Naive thymus-derived CD4-positive, alpha-beta T cell (primary cell): ENCODE measurements at regions of chrX and their contacts with region 1.

Region 1: GRCh38 chrX:74291964-74292807 is 11.8 kb upstream of the ZCCHC13 start:
- DNase-seq: peak; percentile 60 to 87 (median 80)
- ATAC-seq: peak; percentile 93
- H3K4me3 ChIP-seq: peak overlapping the region; percentile 94
- H3K4me3 Mint-ChIP-seq: peak overlapping the region; percentile 83 to 100 (median 96)
- H3K27ac ChIP-seq: peak overlapping the region; percentile 82
- H3K27ac Mint-ChIP-seq: peak overlapping the region; percentile 90 to 100 (median 96)
- H3K4me1 ChIP-seq: peaks cover 0 to 9% of the 10 kb centered on the region in 2 donors
- H3K4me1 Mint-ChIP-seq: peaks cover 0 to 31% (median 19%) of the 10 kb centered on the region in 7 donors
- H3K27me3 ChIP-seq: no peaks in the 10 kb centered on the region
- H3K27me3 Mint-ChIP-seq: no peaks in the 10 kb centered on the region

Region 2: GRCh38 chrX:73943693-73944562 is 348.3 kb before region 1 on chrX:
- CTCF ChIA-PET with region 1: no interaction called
- POLR2A ChIA-PET with region 1: interaction called, 4 read pairs
- intact Hi-C with region 1: loop called (anchors 1 kb)
- DNase-seq: peak; percentile 67 to 92 (median 87)
- ATAC-seq: peak; percentile 100
- H3K4me3 ChIP-seq: peak overlapping the region; percentile 98
- H3K4me3 Mint-ChIP-seq: peak overlapping the region; percentile 82 to 98 (median 94)
- H3K27ac ChIP-seq: peak overlapping the region; percentile 93
- H3K27ac Mint-ChIP-seq: peak overlapping the region; percentile 89 to 99 (median 96)
- H3K4me1 ChIP-seq: peaks cover 0 to 10% of the 10 kb centered on the region in 2 donors
- H3K4me1 Mint-ChIP-seq: peaks cover 12 to 49% (median 27%) of the 10 kb centered on the region in 7 donors
- H3K27me3 ChIP-seq: no peaks in the 10 kb centered on the region
- H3K27me3 Mint-ChIP-seq: peaks cover 0 to 2% (median 0%) of the 10 kb centered on the region in 5 donors

Region 3: GRCh38 chrX:74187211-74187610 is 105.0 kb before region 1 on chrX:
- CTCF ChIA-PET with region 1: no interaction called
- POLR2A ChIA-PET with region 1: no interaction called
- intact Hi-C with region 1: no loop called
- DNase-seq: no peak
- ATAC-seq: no peak
- H3K4me3 ChIP-seq: no peak overlapping the region
- H3K4me3 Mint-ChIP-seq: no peak overlapping the region
- H3K27ac ChIP-seq: no peak overlapping the region
- H3K27ac Mint-ChIP-seq: no peak overlapping the region
- H3K4me1 ChIP-seq: no peaks in the 10 kb centered on the region
- H3K4me1 Mint-ChIP-seq: no peaks in the 10 kb centered on the region
- H3K27me3 ChIP-seq: no peaks in the 10 kb centered on the region
- H3K27me3 Mint-ChIP-seq: no peaks in the 10 kb centered on the region

Region 4: DNA sequence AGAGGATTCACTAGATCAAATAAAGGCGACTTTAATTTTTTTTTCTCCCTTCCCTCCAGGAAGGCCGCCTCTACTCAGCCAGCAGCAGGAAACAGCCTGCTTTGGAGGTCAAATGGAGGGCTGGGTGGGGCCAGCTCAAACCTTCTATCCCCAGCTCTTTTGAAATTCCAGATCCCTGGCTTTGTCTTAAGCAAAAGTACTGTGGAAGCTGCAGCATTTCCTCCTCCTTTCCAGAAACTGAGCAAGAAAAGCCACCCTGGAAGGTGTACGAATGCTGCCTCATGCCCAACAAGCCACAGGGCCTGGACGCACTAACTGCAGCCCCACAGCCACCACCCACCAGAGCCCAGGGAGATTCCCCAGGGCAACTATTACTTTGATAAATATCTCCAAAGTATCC is 43.3 kb before region 1 on chrX:
- CTCF ChIA-PET with region 1: no interaction called
- POLR2A ChIA-PET with region 1: no interaction called
- intact Hi-C with region 1: loop called in 1 of 2 experiments (anchors 5 kb)
- DNase-seq: no peak
- ATAC-seq: no peak
- H3K4me3 ChIP-seq: no peak overlapping the region
- H3K4me3 Mint-ChIP-seq: no peak overlapping the region
- H3K27ac ChIP-seq: no peak overlapping the region
- H3K27ac Mint-ChIP-seq: no peak overlapping the region
- H3K4me1 ChIP-seq: no peaks in the 10 kb centered on the region
- H3K4me1 Mint-ChIP-seq: peaks cover 0 to 12% (median 10%) of the 10 kb centered on the region in 7 donors
- H3K27me3 ChIP-seq: no peaks in the 10 kb centered on the region
- H3K27me3 Mint-ChIP-seq: no peaks in the 10 kb centered on the region

Region 5: DNA sequence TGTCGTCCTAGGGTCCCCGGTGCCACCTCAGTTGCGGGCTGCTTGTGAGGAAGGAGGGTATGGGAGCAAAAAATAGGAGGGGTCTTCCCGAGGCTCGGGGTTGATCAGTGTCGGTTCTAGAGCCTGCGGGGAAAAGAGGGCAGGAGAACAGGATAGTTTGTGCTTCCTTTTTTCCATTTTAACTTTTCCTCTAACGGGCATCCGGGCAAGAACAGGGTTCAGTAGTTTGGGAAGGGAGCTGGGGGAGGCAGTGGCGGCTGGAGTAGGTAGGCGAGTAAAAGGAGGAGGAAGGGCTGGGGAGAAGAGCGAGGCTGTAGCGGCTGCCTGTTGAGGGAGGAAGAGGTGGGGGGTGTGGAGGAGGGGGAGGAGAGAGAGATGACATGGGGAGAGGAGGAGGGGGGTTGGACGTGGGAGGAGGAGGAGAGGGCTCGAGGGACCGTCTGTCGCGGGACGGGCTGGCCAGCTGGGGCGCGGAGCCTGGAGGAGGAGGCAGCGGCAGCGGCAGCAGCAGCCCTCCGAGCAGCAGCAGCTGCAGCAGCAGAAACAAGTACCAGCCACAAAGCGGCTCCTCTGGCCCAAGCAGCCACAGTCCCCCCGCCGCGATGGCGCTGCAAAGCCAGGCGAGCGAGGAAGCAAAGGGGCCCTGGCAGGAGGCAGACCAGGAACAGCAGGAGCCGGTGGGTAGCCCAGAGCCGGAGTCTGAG is 129.0 kb after region 1 on chrX and contains the start of gene SLC16A2:
- CTCF ChIA-PET with region 1: no interaction called
- POLR2A ChIA-PET with region 1: no interaction called
- intact Hi-C with region 1: loop called in 1 of 2 experiments (anchors 5 kb)
- DNase-seq: peak in 7 of 9 donors; percentile 16 to 44 (median 30)
- ATAC-seq: peak; percentile 58
- H3K4me3 ChIP-seq: peak within 1 kb of the TSS; percentile 41
- H3K4me3 Mint-ChIP-seq: peak within 1 kb of the TSS; percentile 81 to 91 (median 86)
- H3K27ac ChIP-seq: no peak within 1 kb of the TSS
- H3K27ac Mint-ChIP-seq: peak within 1 kb of the TSS in 2 of 9 donors; percentile 60 to 65
- H3K4me1 ChIP-seq: peaks cover 3% of the 10 kb centered on the region in 2 donors
- H3K4me1 Mint-ChIP-seq: peaks cover 0 to 14% (median 9%) of the 10 kb centered on the region in 7 donors
- H3K27me3 ChIP-seq: no peaks in the 10 kb centered on the region
- H3K27me3 Mint-ChIP-seq: peaks cover 0 to 59% (median 21%) of the 10 kb centered on the region in 5 donors
- total RNA-seq, gene SLC16A2: 0.27 to 0.38 (median 0.38) TPM in 3 of 5 experiments, not detected in the others

Region 6: GRCh38 chrX:74550295-74550802 is 258.2 kb after region 1 on chrX:
- CTCF ChIA-PET with region 1: no interaction called
- POLR2A ChIA-PET with region 1: no interaction called
- intact Hi-C with region 1: loop called in 1 of 2 experiments (anchors 2 kb)
- DNase-seq: peak; percentile 66 to 86 (median 80)
- ATAC-seq: peak; percentile 100
- H3K4me3 ChIP-seq: peak overlapping the region; percentile 21
- H3K4me3 Mint-ChIP-seq: peak overlapping the region; percentile 21 to 79 (median 76)
- H3K27ac ChIP-seq: no peak overlapping the region
- H3K27ac Mint-ChIP-seq: peak overlapping the region in 7 of 9 donors; percentile 9 to 59 (median 47)
- H3K4me1 ChIP-seq: no peaks in the 10 kb centered on the region
- H3K4me1 Mint-ChIP-seq: peaks cover 0 to 5% (median 3%) of the 10 kb centered on the region in 7 donors
- H3K27me3 ChIP-seq: no peaks in the 10 kb centered on the region
- H3K27me3 Mint-ChIP-seq: no peaks in the 10 kb centered on the region

Region 7: DNA sequence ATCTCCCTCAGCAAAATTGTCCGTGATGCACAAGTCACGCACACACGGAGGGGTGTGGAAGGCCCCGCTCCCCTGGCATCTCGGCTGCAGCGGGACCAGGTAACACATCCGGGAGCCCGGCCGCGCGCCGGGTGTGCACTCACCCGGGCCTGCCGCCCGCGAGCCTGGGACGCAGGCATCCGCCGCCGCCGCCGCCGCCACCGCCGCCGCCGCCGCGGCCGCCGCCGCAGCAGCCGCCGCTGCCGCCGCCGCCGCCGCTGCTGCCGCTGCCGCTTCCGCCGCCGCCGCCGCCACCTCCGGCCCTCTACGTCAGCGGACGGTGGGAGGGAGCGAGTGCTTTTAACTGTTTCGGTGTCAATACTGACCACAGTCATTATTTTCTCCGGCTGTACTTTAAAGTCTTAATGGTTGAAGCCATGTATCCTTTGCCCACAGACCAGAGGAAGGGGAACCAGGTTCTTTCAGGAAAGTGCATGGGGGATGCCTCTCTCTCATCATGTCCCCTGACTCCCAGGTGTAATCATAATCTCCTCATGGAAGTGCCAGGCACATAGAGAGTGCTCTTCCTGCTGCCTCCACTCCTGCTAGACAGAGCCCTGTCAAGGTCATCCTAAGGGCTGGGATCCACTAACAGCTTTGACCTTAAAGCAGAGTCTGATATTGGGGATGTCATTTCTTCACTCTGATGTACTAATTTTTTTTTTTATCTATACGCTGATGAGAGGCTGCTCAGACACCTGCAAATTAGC is 1454.9 kb after region 1 on chrX:
- CTCF ChIA-PET with region 1: no interaction called
- POLR2A ChIA-PET with region 1: no interaction called
- intact Hi-C with region 1: loop called in 1 of 2 experiments (anchors 5 kb)
- DNase-seq: peak; percentile 5 to 30 (median 19)
- ATAC-seq: peak; percentile 56
- H3K4me3 ChIP-seq: peak overlapping the region; percentile 56
- H3K4me3 Mint-ChIP-seq: peak overlapping the region; percentile 70 to 86 (median 82)
- H3K27ac ChIP-seq: no peak overlapping the region
- H3K27ac Mint-ChIP-seq: peak overlapping the region in 7 of 9 donors; percentile 24 to 83 (median 65)
- H3K4me1 ChIP-seq: peaks cover 0 to 4% of the 10 kb centered on the region in 2 donors
- H3K4me1 Mint-ChIP-seq: peaks cover 0 to 19% (median 14%) of the 10 kb centered on the region in 7 donors
- H3K27me3 ChIP-seq: no peaks in the 10 kb centered on the region
- H3K27me3 Mint-ChIP-seq: peaks cover 0 to 13% (median 0%) of the 10 kb centered on the region in 5 donors